ENCODE measurements at regions of chrX and their contacts with region 1.

Region 1: GRCh38 chrX:107776649-107777535 is 641 bp upstream of the NCBP2L start:
- DNase-seq: peak; percentile 53 to 55
- H3K4me3 ChIP-seq: peak overlapping the region; percentile 26 to 62 (median 41); a peak in 5 of 8 replicates
- H3K27ac ChIP-seq: no peak overlapping the region
- H3K4me1 ChIP-seq: peaks cover 0 to 10% (median 6%) of the 10 kb centered on the region in 4 experiments
- H3K27me3 ChIP-seq: peaks cover 20 to 39% (median 32%) of the 10 kb centered on the region in 4 experiments
- CTCF ChIP-seq: peak; percentile 42 to 74 (median 67)
- EP300 ChIP-seq: no peak
- POLR2A ChIP-seq: no peak
- RAD21 ChIP-seq: peak; percentile 82 to 90

Region 2: DNA sequence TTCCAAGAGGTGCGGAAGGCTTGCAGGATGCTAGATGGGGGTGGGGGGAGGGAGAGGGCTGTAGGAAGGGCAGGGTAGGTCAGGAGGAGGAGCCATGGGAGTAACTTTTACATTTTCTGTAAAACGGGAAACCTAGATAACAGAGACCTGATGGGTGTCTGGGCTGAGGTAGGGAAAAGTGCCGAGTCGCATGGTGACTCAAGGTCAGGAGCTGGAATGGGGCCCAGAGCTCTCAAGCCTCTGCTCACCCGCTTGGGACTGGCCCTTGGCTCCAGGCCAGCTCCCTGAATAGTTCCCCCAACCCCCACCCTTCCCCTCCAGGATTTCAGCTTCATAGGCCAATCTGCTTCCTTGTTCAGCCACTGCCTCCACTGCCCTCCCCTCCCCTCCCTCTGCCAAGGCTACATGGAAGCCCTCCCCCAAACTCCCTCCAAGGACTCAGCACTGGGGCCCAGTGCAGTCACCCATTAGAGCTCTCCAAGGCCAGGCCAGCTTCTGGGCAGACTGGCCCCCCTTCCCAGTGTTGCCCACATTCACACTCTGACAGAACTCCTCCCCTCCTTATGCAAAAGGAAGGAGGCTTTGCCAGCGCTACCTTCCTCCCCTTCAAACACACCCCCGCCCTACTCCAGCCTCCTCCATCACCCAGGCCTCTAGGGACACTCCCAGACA is 44.9 kb before region 1 on chrX:
- CTCF ChIA-PET with region 1: interaction called, 12 read pairs
- POLR2A ChIA-PET with region 1: no interaction called
- DNase-seq: no peak
- H3K4me3 ChIP-seq: no peak overlapping the region
- H3K27ac ChIP-seq: no peak overlapping the region; the same call in 1 of the 2 replicates
- H3K4me1 ChIP-seq: peaks cover 0 to 19% (median 10%) of the 10 kb centered on the region in 4 experiments; a peak in 6 of 7 replicates
- H3K27me3 ChIP-seq: no peaks in the 10 kb centered on the region
- CTCF ChIP-seq: no peak
- EP300 ChIP-seq: no peak
- POLR2A ChIP-seq: 0 out of 3 replicates have a peak, but pooled peaks of 1 of the 2 experiments have one; percentile 32
- RAD21 ChIP-seq: no peak

Region 3: DNA sequence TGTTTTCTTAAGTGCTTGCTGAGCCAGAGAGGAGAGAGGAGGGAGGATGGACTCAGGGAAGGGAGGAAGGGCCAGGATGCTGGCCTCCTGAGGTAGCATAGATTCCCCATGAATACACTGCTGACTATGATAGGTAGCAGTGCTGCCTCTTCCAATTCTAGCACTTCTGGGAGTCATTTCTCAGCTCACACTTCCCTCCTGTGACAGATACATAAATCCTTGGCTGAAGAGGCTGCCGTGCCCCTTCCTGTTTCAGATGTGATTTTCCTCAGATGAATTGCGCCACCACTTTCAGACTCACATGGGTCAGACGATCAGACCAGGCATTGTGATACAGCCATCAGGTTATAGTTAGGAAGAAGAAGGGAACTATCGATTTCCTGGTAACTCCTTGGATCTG is 23.7 kb before region 1 on chrX:
- CTCF ChIA-PET with region 1: interaction called, 21 read pairs
- POLR2A ChIA-PET with region 1: interaction called, 4 read pairs
- DNase-seq: no peak
- H3K4me3 ChIP-seq: no peak overlapping the region
- H3K27ac ChIP-seq: no peak overlapping the region
- H3K4me1 ChIP-seq: peaks cover 0 to 9% (median 2%) of the 10 kb centered on the region in 4 experiments; a peak in 4 of 7 replicates
- H3K27me3 ChIP-seq: no peaks in the 10 kb centered on the region
- CTCF ChIP-seq: no peak
- EP300 ChIP-seq: no peak
- POLR2A ChIP-seq: no peak
- RAD21 ChIP-seq: no peak

Region 4: GRCh38 chrX:107758231-107758766 is 18.6 kb before region 1 on chrX:
- CTCF ChIA-PET with region 1: interaction called, 21 read pairs
- POLR2A ChIA-PET with region 1: no interaction called
- DNase-seq: no peak
- H3K4me3 ChIP-seq: no peak overlapping the region
- H3K27ac ChIP-seq: no peak overlapping the region
- H3K4me1 ChIP-seq: no peaks in the 10 kb centered on the region
- H3K27me3 ChIP-seq: no peaks in the 10 kb centered on the region
- CTCF ChIP-seq: no peak
- EP300 ChIP-seq: no peak
- POLR2A ChIP-seq: no peak
- RAD21 ChIP-seq: no peak

Region 5: DNA sequence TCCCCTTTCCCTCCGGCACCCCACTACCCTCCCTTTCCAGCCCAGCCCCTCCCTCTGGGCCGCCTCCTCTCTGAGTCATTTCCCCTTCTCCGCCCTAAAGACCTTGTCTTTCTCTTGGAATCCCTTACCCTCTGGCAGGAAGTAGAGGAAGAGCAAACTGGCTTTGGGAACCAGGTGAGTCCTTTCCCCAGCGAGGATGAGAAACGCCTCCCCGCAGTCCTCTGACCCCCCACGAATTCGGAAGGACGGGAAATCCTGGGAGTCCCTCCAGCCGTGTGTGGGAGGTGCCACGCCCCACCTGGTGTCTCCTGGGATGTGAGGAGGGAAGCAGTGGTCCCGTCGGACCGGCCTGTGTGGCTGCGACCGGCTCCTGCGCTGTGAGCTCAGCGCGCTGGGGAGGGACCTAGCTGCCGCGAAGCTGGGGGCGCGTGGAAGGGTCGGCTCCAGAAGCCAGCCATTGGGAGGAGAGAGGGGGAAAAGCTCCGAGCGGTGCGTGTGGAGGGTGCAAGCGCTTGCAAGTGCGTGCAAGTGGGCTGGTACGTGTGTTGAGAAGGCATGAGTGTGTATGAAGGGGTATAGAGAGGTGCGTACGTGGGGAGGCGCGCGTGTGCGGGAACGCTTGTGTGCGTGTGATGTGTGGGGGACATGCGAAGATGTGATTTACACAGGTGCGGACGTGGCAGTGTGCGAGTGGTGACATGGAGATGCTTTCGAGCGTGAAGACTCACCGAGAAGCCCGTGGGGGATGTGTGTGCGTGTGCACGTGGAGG is 159.0 kb after region 1 on chrX:
- CTCF ChIA-PET with region 1: no interaction called
- POLR2A ChIA-PET with region 1: no interaction called
- DNase-seq: peak in 1 of 2 experiments; percentile 52
- H3K4me3 ChIP-seq: peak overlapping the region; percentile 55 to 86 (median 66)
- H3K27ac ChIP-seq: no peak overlapping the region; the same call in 1 of the 2 replicates
- H3K4me1 ChIP-seq: peaks cover 0 to 7% (median 0%) of the 10 kb centered on the region in 4 experiments; a peak in 2 of 7 replicates
- H3K27me3 ChIP-seq: no peaks in the 10 kb centered on the region
- CTCF ChIP-seq: no peak
- EP300 ChIP-seq: no peak
- POLR2A ChIP-seq: no peak
- RAD21 ChIP-seq: no peak